ENCODE measurements at regions of chr21 and their contacts with region 1.

Region 1: GRCh38 chr21:37682966-37683365 is 233.3 kb downstream of the KCNJ6 start:
- DNase-seq: no peak
- H3K4me3 ChIP-seq: no peak overlapping the region
- H3K27ac ChIP-seq: no peak overlapping the region
- H3K4me1 ChIP-seq: no peaks in the 10 kb centered on the region
- H3K27me3 ChIP-seq: no peaks in the 10 kb centered on the region
- CTCF ChIP-seq: no peak
- EP300 ChIP-seq: no peak
- POLR2A ChIP-seq: no peak

Region 2: DNA sequence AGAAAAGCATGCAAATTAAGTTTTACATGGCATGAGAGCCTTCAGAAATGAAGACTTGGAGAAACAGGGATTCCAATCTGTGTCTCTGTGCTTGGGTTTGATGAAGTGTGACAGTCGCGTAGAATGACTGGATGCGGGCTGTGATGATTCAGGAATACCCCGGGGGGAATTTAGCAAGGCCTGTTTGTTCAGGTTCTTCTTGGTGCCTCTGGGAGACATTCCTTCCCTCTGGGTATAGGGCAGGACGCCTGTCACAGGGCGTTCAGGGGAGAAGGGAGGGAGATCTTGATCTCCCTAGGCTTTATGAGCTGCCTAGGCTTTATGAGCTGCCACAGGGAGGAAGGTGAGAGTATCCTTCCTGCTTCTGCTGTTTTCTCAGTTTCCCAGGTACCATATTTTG is 1489.8 kb before region 1 on chr21:
- intact Hi-C with region 1: no loop called
- DNase-seq: no peak
- H3K4me3 ChIP-seq: no peak overlapping the region
- H3K27ac ChIP-seq: no peak overlapping the region
- H3K4me1 ChIP-seq: no peaks in the 10 kb centered on the region
- H3K27me3 ChIP-seq: no peaks in the 10 kb centered on the region
- CTCF ChIP-seq: no peak
- EP300 ChIP-seq: no peak
- POLR2A ChIP-seq: no peak

Region 3: DNA sequence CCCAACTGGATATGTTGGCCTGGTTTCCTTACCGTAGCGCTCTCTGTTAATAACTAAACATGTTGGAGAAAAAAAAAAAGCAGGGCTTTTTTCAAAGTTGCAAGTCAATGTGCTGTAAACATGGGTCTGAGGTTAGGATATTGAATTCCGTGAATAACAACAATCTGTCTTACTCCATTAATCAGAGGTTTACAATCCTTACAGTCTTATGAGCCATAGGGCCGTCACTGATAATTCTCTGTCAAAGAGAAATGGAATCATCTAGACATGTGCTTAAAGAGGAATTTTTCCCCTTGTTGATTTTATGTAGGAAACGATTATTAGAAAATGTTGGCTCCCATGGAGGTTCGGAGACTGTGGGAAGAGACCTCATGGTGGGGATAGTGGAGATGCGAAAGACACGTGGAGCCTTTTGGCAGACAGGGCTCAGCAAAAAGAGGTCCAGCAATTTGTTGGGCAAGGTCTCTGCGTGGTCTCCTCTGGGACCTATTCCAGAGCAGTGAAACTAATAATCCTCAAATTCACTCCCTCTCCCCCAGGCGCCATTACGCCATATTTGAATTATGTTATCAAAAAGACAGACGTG is 1119.5 kb before region 1 on chr21:
- intact Hi-C with region 1: loop called in 1 of 4 experiments (anchors 5 kb)
- DNase-seq: no peak
- H3K4me3 ChIP-seq: no peak overlapping the region
- H3K27ac ChIP-seq: no peak overlapping the region
- H3K4me1 ChIP-seq: no peaks in the 10 kb centered on the region
- H3K27me3 ChIP-seq: no peaks in the 10 kb centered on the region
- CTCF ChIP-seq: no peak
- EP300 ChIP-seq: no peak
- POLR2A ChIP-seq: no peak